Heart left ventricle (tissue), 16 donors: ENCODE measurements at regions of chr5 and their contacts with region 1.

Region 1: GRCh38 chr5:38265546-38266179 is 7.3 kb downstream of the EGFLAM start:
- DNase-seq: peak in 3 of 5 donors; percentile 48 to 59 (median 54)
- ATAC-seq: peak; percentile 70 to 83 (median 76)
- H3K4me3 ChIP-seq: no peak overlapping the region
- H3K27ac ChIP-seq: peak overlapping the region in 1 of 12 donors; percentile 53
- H3K4me1 ChIP-seq: peaks cover 0 to 9% (median 0%) of the 10 kb centered on the region in 12 donors
- H3K27me3 ChIP-seq: peaks cover 0 to 56% (median 13%) of the 10 kb centered on the region in 9 donors
- CTCF ChIP-seq: peak; percentile 62 to 85 (median 73)
- POLR2A ChIP-seq: no peak

Region 2: DNA sequence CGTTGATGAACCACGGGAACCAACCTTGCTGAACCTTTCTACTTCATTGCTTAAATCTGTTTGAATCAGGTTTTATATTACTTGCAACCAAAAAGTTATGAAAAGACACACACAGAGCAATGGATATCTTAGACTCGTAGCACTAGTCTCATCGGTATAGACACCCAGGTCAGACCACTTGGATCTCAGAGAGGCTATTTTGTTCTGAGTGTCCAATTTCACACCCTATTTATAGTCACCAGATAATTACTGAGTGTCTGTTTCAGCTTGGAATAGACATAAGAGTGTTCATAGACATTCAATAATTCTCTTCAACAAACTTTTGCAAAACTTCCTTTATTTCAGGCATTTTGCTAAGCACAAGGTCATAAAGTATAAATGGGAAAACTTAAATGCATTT is 152.7 kb before region 1 on chr5:
- intact Hi-C with region 1: no loop called
- DNase-seq: no peak
- ATAC-seq: peak; percentile 76 to 89 (median 82)
- H3K4me3 ChIP-seq: no peak overlapping the region
- H3K27ac ChIP-seq: no peak overlapping the region
- H3K4me1 ChIP-seq: peaks cover 0 to 4% (median 0%) of the 10 kb centered on the region in 12 donors
- H3K27me3 ChIP-seq: no peaks in the 10 kb centered on the region
- CTCF ChIP-seq: no peak
- POLR2A ChIP-seq: no peak

Region 3: DNA sequence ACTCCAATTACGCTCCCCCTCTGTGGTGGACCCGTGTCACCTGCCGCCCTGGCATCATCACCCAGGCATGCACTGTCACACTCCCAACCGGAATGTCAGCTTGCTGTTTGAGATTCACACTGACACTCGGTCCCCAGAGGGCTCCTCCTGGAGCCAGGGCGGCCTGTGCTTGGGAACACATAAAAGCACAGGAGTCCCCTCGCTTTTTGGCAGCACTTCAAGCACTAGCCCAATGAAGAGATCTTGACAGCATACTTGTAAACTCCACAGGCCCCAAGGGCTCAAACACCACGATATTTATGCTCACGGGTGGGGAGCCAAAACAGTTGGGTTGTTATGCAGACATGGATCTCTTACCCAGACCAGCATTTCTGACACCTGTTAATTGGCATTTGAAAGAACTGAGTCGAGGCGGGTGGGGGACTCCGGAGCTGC is 98.1 kb before region 1 on chr5:
- intact Hi-C with region 1: no loop called
- DNase-seq: peak; percentile 18 to 67 (median 47)
- ATAC-seq: peak; percentile 68 to 94 (median 86)
- H3K4me3 ChIP-seq: no peak overlapping the region
- H3K27ac ChIP-seq: peak overlapping the region in 1 of 12 donors; percentile 1
- H3K4me1 ChIP-seq: peaks cover 0 to 7% (median 0%) of the 10 kb centered on the region in 12 donors
- H3K27me3 ChIP-seq: no peaks in the 10 kb centered on the region
- CTCF ChIP-seq: no peak
- POLR2A ChIP-seq: no peak

Region 4: GRCh38 chr5:38307845-38308244 is 42.2 kb after region 1 on chr5:
- intact Hi-C with region 1: loop called in 2 of 10 experiments (anchors 5 kb)
- DNase-seq: no peak
- ATAC-seq: peak in 1 of 4 donors; percentile 53
- H3K4me3 ChIP-seq: no peak overlapping the region
- H3K27ac ChIP-seq: peak overlapping the region in 10 of 12 donors; percentile 21 to 77 (median 63)
- H3K4me1 ChIP-seq: no peaks in the 10 kb centered on the region
- H3K27me3 ChIP-seq: no peaks in the 10 kb centered on the region
- CTCF ChIP-seq: no peak
- POLR2A ChIP-seq: no peak

Region 5: GRCh38 chr5:38316544-38317224 is 51.0 kb after region 1 on chr5:
- intact Hi-C with region 1: loop called in 1 of 10 experiments (anchors 5 kb)
- DNase-seq: peak in 4 of 5 donors; percentile 22 to 58 (median 39)
- ATAC-seq: peak; percentile 48 to 75 (median 64)
- H3K4me3 ChIP-seq: no peak overlapping the region
- H3K27ac ChIP-seq: peak overlapping the region in 8 of 12 donors; percentile 2 to 50 (median 38)
- H3K4me1 ChIP-seq: peaks cover 0 to 7% (median 0%) of the 10 kb centered on the region in 12 donors
- H3K27me3 ChIP-seq: peaks cover 0 to 2% (median 0%) of the 10 kb centered on the region in 9 donors
- CTCF ChIP-seq: peak in 1 of 12 donors; percentile 17
- POLR2A ChIP-seq: no peak

Region 6: DNA sequence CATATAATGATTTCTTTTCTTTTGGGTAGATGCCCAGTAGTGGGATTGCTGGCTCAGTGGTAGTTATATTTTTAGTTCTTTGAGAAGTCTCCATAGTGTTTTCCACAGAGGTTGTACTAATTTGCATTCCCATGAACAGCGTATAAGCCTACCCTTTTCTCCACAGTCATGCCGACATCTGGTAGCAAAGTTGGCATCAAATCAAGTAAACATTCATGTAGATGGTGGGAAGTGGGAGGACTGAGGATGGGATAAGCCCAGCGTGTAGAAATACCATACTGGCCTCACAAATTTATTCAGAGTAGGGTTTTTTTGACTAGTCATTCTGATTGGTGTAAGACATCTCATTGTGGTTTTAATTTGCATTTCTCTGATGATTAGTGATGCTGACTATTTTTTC is 108.1 kb after region 1 on chr5:
- intact Hi-C with region 1: loop called in 3 of 10 experiments (anchors 5 to 10 kb)
- DNase-seq: no peak
- ATAC-seq: no peak
- H3K4me3 ChIP-seq: no peak overlapping the region
- H3K27ac ChIP-seq: peak overlapping the region in 2 of 12 donors; percentile 17 to 32
- H3K4me1 ChIP-seq: peaks cover 0 to 12% (median 0%) of the 10 kb centered on the region in 12 donors
- H3K27me3 ChIP-seq: peaks cover 0 to 6% (median 0%) of the 10 kb centered on the region in 9 donors
- CTCF ChIP-seq: no peak
- POLR2A ChIP-seq: no peak

Region 7: GRCh38 chr5:38382898-38383297 is 117.2 kb after region 1 on chr5:
- intact Hi-C with region 1: loop called in 2 of 10 experiments (anchors 5 to 10 kb)
- DNase-seq: peak in 4 of 5 donors; percentile 40 to 56 (median 44)
- ATAC-seq: peak; percentile 67 to 95 (median 88)
- H3K4me3 ChIP-seq: no peak overlapping the region
- H3K27ac ChIP-seq: no peak overlapping the region
- H3K4me1 ChIP-seq: peaks cover 0 to 5% (median 0%) of the 10 kb centered on the region in 12 donors
- H3K27me3 ChIP-seq: peaks cover 0 to 9% (median 0%) of the 10 kb centered on the region in 9 donors
- CTCF ChIP-seq: peak; percentile 63 to 89 (median 73)
- POLR2A ChIP-seq: no peak

Region 8: GRCh38 chr5:38426986-38427950 is 161.6 kb after region 1 on chr5:
- intact Hi-C with region 1: no loop called
- DNase-seq: no peak
- ATAC-seq: no peak
- H3K4me3 ChIP-seq: no peak overlapping the region
- H3K27ac ChIP-seq: no peak overlapping the region
- H3K4me1 ChIP-seq: no peaks in the 10 kb centered on the region
- H3K27me3 ChIP-seq: peaks cover 0 to 29% (median 0%) of the 10 kb centered on the region in 9 donors
- CTCF ChIP-seq: no peak
- POLR2A ChIP-seq: no peak

Region 9: GRCh38 chr5:39319395-39319794 is 1053.7 kb after region 1 on chr5:
- intact Hi-C with region 1: no loop called
- DNase-seq: peak in 1 of 5 donors; percentile 21
- ATAC-seq: no peak
- H3K4me3 ChIP-seq: no peak overlapping the region
- H3K27ac ChIP-seq: no peak overlapping the region
- H3K4me1 ChIP-seq: no peaks in the 10 kb centered on the region
- H3K27me3 ChIP-seq: peaks cover 0 to 7% (median 0%) of the 10 kb centered on the region in 9 donors
- CTCF ChIP-seq: no peak
- POLR2A ChIP-seq: no peak